PC-9 (cell line): ENCODE measurements at regions of chr17 and their contacts with region 1.

Region 1: DNA sequence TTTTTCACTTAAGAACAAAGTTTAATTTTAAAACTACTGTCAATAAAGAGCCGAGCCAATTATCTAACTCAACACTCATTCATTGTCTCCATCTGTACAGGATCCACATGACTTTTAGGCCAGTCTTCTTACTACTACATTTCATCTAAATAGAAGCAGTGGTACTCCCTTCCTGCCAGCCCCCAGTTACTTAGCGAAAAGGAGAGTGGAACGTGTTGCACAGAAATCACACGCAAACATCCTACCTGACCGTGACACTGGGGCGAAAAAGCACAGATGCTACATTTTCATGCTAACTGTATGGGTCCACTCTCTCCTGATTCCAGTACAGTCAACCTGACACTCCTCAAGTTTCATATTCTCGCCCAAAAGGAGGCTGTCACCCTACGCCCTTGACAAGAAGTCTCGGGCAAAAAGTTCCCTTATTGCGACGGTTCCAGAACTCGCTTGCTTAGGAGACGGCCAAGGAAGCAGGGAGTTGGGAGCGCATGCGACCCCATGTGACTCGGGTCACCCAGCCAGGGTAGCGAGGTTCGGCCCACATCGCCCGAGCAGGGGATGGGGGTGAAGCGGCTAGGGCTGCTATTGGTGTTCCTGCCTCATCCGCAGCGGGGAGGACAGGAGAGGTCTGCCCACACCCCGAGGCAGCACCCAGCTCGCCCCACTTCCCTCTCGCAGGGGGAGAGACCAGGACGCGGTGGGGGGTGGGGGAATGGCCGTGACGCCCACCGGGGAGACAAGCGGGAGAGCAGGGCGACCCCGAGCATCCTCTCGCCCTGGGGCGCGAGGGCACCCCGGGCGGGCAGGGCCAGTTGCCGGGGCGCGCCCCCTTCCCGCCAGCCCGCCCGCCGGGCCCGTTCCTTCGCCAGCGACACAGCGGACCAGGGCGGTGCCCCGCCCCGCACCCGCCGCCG is 935 bp downstream of the GNA13 start:
- DNase-seq: peak; percentile 41 to 43
- H3K4me3 ChIP-seq: peak overlapping the region; percentile 80
- H3K27ac ChIP-seq: peak overlapping the region; percentile 85
- H3K4me1 ChIP-seq: peaks cover 20% of the 10 kb centered on the region
- H3K27me3 ChIP-seq: no peaks in the 10 kb centered on the region
- CTCF ChIP-seq: no peak

Region 2: GRCh38 chr17:64718059-64718458 is 337.5 kb before region 1 on chr17:
- CTCF ChIA-PET with region 1: no interaction called
- POLR2A ChIA-PET with region 1: interaction called, 28 read pairs
- intact Hi-C with region 1: no loop called
- DNase-seq: peak in 1 of 2 experiments; percentile 65
- H3K4me3 ChIP-seq: no peak overlapping the region
- H3K27ac ChIP-seq: no peak overlapping the region
- H3K4me1 ChIP-seq: peaks cover 3% of the 10 kb centered on the region
- H3K27me3 ChIP-seq: no peaks in the 10 kb centered on the region
- CTCF ChIP-seq: no peak

Region 3: GRCh38 chr17:64975329-64976087 is 80.1 kb before region 1 on chr17:
- CTCF ChIA-PET with region 1: no interaction called
- POLR2A ChIA-PET with region 1: no interaction called
- intact Hi-C with region 1: loop called (anchors 1 kb)
- DNase-seq: peak; percentile 87 to 98
- H3K4me3 ChIP-seq: peak overlapping the region; percentile 70
- H3K27ac ChIP-seq: peak overlapping the region; percentile 87
- H3K4me1 ChIP-seq: peaks cover 22% of the 10 kb centered on the region
- H3K27me3 ChIP-seq: no peaks in the 10 kb centered on the region
- CTCF ChIP-seq: no peak

Region 4: DNA sequence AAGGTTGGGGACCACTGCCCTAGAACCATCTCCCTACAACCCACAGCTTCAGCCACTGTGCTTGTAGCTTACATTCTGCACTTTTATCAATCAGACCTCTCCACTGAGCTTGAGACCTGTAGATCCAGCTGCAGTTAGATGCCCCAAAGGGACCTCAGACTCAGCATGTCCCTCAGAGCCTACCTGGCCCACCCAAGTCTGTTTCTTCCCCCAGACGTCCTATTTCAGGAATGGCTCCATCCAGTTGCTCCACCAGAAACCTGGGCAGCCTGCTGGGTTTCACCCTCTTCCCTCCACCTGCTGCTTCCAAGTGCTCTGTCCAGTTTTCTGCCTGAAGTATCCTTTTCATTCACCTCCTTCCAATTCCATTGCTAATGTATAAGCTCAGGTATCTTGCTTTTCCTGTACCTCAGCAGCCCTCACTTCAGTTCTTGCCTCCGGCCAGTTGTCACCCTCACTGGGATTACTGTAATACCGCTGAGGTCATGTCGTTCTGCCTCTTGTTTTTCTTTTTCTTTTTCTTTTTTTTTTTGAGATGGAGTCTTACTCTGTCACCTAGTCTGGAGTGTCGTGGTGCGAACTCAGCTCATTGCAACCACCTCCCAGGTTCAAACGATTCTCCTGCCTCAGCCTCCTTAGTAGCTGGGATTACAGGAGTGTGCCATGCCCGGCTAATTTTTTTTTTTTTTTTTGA is 54.0 kb before region 1 on chr17:
- CTCF ChIA-PET with region 1: interaction called, 14 read pairs
- POLR2A ChIA-PET with region 1: no interaction called
- intact Hi-C with region 1: no loop called
- DNase-seq: no peak
- H3K4me3 ChIP-seq: no peak overlapping the region
- H3K27ac ChIP-seq: no peak overlapping the region
- H3K4me1 ChIP-seq: no peaks in the 10 kb centered on the region
- H3K27me3 ChIP-seq: no peaks in the 10 kb centered on the region
- CTCF ChIP-seq: no peak

Region 5: DNA sequence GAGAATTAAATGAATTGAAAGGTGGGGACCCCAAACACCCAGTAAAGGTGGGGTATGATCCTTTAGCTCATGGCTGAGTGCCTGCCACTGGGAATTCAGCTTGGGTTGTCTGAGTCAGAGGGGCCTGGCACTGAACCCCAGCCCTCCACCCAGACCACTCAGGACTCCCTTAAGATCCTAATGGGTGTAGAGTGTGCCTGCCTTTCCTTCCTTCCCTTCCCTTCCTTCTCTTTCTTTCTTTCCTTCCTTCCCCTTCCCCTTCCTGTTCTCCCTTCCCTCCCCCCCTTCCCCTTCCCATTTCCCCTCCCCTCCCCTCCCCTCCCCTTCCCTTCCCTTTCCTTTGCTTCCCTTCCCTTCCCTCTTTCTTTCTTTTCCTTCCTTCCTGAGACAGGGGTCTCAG is 30.9 kb after region 1 on chr17:
- CTCF ChIA-PET with region 1: no interaction called
- POLR2A ChIA-PET with region 1: interaction called, 12 read pairs
- intact Hi-C with region 1: no loop called
- DNase-seq: no peak
- H3K4me3 ChIP-seq: no peak overlapping the region
- H3K27ac ChIP-seq: no peak overlapping the region
- H3K4me1 ChIP-seq: 0 out of 2 replicates have a peak, but pooled peaks cover 7% of the 10 kb centered on the region
- H3K27me3 ChIP-seq: no peaks in the 10 kb centered on the region
- CTCF ChIP-seq: no peak

Region 6: DNA sequence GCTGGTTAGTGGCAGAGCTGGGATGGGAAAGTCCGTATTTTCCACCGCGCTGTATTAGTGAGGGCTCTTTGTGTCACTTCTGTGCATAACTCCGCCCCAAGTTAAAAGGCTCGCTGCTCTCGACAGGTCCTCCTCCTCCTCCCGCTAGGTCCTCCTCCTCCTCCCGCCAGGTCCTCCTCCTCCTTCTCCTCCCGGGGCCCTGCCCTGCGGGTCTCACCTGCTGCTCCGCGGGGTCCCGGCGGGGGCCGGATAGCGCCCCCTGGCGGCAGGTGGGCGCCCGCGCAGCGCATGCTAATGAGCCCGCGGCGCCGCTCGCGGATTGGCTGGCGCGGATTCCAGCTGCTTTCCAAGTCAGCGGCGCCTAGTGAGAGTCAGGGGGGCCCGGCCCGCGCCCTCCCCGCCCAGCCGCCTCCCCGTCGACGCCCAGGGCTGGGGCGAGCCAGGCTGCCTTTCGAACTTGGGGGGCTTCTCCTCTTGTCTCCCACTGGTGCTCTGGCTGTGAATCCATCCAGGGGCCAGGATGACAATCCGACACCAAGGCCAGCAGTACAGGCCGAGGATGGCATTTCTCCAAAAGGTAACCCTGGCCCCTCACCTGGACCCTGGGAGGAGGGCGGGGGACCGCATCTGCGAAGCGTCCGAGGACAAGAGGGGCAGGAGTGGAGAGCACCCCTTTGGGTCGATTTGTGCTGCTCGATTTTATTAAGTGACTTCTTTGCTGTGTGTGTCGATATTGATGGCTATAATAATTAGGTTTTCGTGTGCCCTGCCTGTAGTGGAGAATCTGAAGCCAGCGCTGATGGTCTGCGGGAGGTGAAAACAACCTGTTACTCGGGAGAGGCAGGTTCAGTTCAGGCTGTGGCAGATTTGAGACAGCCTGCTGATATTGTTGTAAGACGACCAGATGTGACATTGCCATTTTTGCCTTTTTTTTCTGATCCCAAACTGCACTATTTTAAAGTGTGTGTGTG is 81.7 kb after region 1 on chr17 and contains the start of gene RGS9:
- CTCF ChIA-PET with region 1: interaction called, 12 read pairs
- POLR2A ChIA-PET with region 1: no interaction called
- intact Hi-C with region 1: no loop called
- DNase-seq: peak; percentile 49 to 86
- H3K4me3 ChIP-seq: peak within 1 kb of the TSS; percentile 49
- H3K27ac ChIP-seq: no peak within 1 kb of the TSS
- H3K4me1 ChIP-seq: peaks cover 11% of the 10 kb centered on the region; the same call in 1 of the 2 replicates
- H3K27me3 ChIP-seq: peaks cover 10% of the 10 kb centered on the region; the same call in 1 of the 2 replicates
- CTCF ChIP-seq: peak; percentile 98
- total RNA-seq, gene RGS9: 5.7 and 6.1 TPM in 2 replicates